Motor neuron (in vitro differentiated cells): ENCODE measurements at regions of chr2 and their contacts with region 1.

Region 1: DNA sequence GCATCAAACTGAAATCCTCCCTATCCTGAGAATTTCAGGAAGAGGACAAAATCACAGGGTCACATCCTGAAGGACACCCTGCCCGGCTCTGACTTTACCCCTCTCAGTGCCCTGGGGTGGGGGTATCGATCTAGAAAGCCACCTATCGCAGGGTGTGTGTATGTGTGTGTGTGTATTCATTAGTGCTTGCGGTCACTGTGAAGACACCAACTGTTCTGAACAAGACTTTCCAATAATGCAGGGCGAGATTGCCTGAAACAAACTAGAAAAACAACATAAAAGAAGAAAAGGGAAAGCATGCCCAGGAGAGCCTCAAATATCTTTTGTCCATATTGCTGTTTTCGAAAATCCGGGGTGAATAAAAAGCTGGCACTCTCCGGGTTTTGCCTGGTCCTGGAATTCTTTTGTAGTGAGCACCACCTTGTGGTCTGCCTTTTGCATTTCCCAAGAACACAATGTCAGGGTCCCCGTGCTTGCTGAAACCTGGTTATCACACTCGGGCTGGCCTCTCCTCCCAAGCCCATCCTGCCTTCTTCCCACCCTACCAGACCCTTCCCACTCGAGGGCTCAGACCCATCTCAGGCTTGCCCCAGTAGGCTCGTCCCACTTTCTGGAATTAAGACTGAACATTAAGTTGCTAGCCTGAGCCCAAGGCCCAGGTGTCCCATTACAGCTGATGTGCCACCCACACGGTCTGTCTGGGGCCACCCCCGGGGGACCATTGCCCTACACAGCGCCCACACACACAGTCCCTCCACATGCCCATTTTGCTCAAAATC is 25.0 kb upstream of the COPS8 start:
- ATAC-seq: peak; percentile 78 to 90 (median 84)
- H3K4me3 ChIP-seq: no peak overlapping the region
- H3K27ac ChIP-seq: no peak overlapping the region
- H3K4me1 ChIP-seq: peaks cover 14 to 20% of the 10 kb centered on the region in 2 donors

Region 2: GRCh38 chr2:236343400-236344161 is 717.1 kb before region 1 on chr2:
- in situ Hi-C with region 1: loop called in 7 of 9 experiments (anchors 10 to 25 kb)
- ATAC-seq: peak in 3 of 8 experiments; percentile 32 to 50 (median 46)
- H3K4me3 ChIP-seq: no peak overlapping the region
- H3K27ac ChIP-seq: no peak overlapping the region
- H3K4me1 ChIP-seq: peaks cover 29 to 34% of the 10 kb centered on the region in 2 donors

Region 3: DNA sequence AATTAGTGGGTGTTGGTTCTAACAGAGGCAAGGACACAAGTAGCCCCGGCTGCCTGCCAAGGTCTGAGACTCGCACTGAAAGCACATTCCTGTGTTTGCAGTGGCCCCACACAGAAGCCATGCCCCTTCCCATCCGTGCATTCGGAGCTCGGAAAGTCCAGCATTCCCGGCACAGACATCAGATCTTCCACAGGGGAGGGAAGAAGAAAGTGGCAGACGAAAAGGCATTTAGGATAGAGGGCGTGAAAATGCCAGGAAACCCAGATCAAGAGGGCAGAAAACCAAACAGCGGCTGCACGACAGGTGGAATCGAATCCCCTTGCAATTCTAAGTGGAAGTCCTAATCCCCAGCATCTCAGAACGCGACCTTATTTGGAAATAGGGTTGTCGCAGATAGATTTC is 691.1 kb before region 1 on chr2:
- in situ Hi-C with region 1: loop called in 2 of 9 experiments (anchors 10 to 25 kb)
- ATAC-seq: peak in 6 of 8 experiments; percentile 33 to 84 (median 62)
- H3K4me3 ChIP-seq: no peak overlapping the region
- H3K27ac ChIP-seq: no peak overlapping the region
- H3K4me1 ChIP-seq: peaks cover 9 to 19% of the 10 kb centered on the region in 2 donors